ENCODE measurements at regions of chr2 and their contacts with region 1.

Region 1: DNA sequence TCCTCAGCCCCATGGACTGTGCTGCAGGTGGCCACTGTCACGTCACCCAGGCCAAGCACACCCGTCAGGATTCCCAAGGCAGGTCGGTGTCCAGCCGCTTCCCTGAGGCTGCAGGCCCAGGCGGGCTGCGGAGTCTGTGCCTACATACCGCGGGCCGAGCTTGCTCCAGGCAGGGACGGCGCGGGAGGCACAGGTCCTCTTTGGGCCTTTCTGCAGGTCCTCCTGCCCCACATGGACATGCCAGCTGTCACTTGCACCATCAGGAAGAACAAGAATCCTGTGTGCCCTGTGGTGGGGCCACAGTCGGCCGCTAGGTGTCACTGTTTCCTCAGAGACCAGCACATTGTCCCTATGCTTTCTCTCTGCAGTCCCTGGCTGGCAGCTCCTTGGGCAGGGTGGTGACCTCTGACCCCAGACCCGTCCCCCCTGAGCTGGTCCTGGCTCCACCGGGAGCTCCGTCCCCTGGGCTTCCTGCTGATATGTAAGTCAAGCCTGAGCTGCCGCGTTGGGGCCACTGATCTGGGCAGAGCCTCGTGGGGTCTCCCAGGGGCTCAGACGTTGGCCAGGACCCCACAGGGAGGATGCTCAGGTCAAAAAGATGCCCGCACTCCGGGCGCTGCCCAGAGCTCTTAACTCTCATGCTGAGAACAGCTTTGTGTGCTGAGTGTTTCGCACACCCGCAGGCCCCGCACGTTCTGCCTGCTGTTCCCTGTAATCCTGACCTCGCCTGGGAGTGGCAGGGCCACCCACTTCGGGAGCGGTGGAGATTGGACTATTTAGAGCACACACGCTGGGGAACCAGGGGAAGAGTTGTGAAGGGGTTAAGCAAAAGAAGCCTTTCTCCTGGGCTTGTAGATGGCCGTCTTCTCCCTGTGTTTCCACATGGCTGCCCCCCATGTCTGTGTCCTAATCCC is 17.3 kb upstream of the AGXT start:
- DNase-seq: peak; percentile 90
- H3K4me3 ChIP-seq: no peak overlapping the region
- H3K27ac ChIP-seq: no peak overlapping the region
- H3K4me1 ChIP-seq: peaks cover 0 to 16% (median 4%) of the 10 kb centered on the region in 4 donors
- H3K27me3 ChIP-seq: no peaks in the 10 kb centered on the region
- CTCF ChIP-seq: peak; percentile 90 to 97 (median 97)
- EP300 ChIP-seq: no peak
- POLR2A ChIP-seq: no peak

Region 2: GRCh38 chr2:240434728-240435456 is 416.4 kb before region 1 on chr2:
- in situ Hi-C with region 1: no loop called
- intact Hi-C with region 1: no loop called
- DNase-seq: peak; percentile 91
- H3K4me3 ChIP-seq: peak overlapping the region; percentile 32 to 86 (median 76)
- H3K27ac ChIP-seq: peak overlapping the region; percentile 84 to 94 (median 92)
- H3K4me1 ChIP-seq: peaks cover 14 to 36% (median 22%) of the 10 kb centered on the region in 4 donors
- H3K27me3 ChIP-seq: peaks cover 22% of the 10 kb centered on the region
- CTCF ChIP-seq: no peak
- EP300 ChIP-seq: no peak
- POLR2A ChIP-seq: no peak

Region 3: DNA sequence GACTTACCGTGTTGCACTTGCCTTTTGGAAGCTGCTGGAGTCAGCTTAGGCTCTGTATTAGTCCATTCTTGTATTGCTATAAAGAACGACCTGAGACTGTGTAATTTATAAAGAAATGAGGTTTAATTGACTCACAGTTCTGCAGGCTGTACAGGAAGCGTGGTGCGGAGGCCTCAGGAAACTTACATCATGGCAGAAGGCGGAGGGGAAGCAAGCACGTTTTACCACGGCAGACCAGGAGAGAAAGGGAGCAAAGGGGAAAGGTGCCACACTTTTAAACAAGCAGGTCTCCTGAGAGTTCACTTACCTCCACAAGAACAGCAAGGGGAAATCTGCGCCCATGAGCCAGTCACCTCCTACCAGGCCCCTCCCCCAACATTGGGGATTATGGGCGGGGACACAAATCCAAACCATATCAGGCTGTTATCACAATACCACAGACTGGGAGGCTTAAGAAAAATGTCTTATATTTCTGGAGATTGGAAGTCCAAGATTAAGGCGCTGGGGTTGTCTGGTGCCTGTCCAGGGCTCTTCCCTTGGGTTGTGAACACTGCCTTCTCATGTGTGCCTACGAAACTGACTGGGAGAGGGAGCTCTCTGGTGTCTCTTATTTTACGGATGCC is 879.4 kb after region 1 on chr2:
- in situ Hi-C with region 1: no loop called
- intact Hi-C with region 1: loop called (anchors 2 kb)
- DNase-seq: no peak
- H3K4me3 ChIP-seq: no peak overlapping the region
- H3K27ac ChIP-seq: no peak overlapping the region
- H3K4me1 ChIP-seq: peaks cover 3 to 10% (median 9%) of the 10 kb centered on the region in 4 donors
- H3K27me3 ChIP-seq: no peaks in the 10 kb centered on the region
- CTCF ChIP-seq: no peak
- EP300 ChIP-seq: no peak
- POLR2A ChIP-seq: no peak

Measured in transverse colon (tissue), 4 donors.